ENCODE measurements at regions of chr15 and their contacts with region 1.

Region 1: DNA sequence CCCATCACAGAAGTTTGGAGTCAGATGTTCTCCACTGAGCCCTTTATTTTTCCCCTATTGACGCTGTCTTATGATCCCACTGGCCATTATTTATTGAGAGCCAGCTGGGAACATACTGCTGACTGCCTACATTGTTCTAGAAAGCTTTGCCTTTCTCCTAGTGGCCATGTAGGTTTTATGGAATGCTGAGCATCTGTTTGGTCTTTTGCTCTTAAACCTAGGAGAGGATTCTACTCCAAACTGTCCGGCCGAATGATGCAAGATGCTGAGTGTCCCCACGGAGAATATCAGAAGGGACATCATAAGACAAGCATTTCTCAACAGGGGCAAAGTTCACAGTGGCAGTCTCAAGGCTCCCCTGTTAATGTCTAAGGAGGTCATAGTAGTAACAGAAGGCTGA is 171.4 kb downstream of the ARRDC4 start:
- DNase-seq: no peak
- ATAC-seq: no peak
- H3K4me3 ChIP-seq: no peak overlapping the region
- H3K4me3 Mint-ChIP-seq: no peak overlapping the region
- H3K27ac ChIP-seq: no peak overlapping the region
- H3K27ac Mint-ChIP-seq: no peak overlapping the region
- H3K4me1 ChIP-seq: no peaks in the 10 kb centered on the region
- H3K4me1 Mint-ChIP-seq: no peaks in the 10 kb centered on the region
- H3K27me3 ChIP-seq: no peaks in the 10 kb centered on the region
- H3K27me3 Mint-ChIP-seq: no peaks in the 10 kb centered on the region
- CTCF ChIP-seq: no peak

Region 2: GRCh38 chr15:98076021-98076816 is 55.7 kb before region 1 on chr15:
- CTCF ChIA-PET with region 1: no interaction called
- POLR2A ChIA-PET with region 1: no interaction called
- intact Hi-C with region 1: loop called in 1 of 2 experiments (anchors 10 kb)
- DNase-seq: peak in 1 of 14 experiments; percentile 7
- ATAC-seq: no peak
- H3K4me3 ChIP-seq: no peak overlapping the region
- H3K4me3 Mint-ChIP-seq: no peak overlapping the region
- H3K27ac ChIP-seq: no peak overlapping the region
- H3K27ac Mint-ChIP-seq: no peak overlapping the region
- H3K4me1 ChIP-seq: no peaks in the 10 kb centered on the region
- H3K4me1 Mint-ChIP-seq: no peaks in the 10 kb centered on the region
- H3K27me3 ChIP-seq: no peaks in the 10 kb centered on the region
- H3K27me3 Mint-ChIP-seq: no peaks in the 10 kb centered on the region
- CTCF ChIP-seq: no peak

Region 3: DNA sequence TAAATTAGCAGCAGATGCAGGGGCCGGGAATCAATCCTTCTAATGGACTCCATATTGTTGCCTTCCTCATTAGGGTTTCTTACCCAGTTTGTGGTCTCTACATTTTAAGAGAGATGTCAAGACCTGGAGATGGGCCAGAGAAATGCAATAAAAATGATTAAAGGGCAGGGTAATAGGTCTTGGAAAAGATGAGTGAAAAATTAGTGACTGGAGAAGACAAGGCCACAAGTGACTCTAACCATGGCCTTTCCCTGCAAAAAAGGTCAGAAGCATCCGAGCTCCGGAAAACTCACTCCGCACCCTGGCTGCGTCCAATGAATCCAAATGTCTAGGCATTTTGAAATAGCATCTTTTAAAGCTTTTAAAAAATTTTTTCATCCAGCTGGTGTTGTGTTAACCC is 18.6 kb before region 1 on chr15:
- CTCF ChIA-PET with region 1: no interaction called
- POLR2A ChIA-PET with region 1: no interaction called
- intact Hi-C with region 1: no loop called
- DNase-seq: no peak
- ATAC-seq: no peak
- H3K4me3 ChIP-seq: no peak overlapping the region
- H3K4me3 Mint-ChIP-seq: no peak overlapping the region
- H3K27ac ChIP-seq: no peak overlapping the region
- H3K27ac Mint-ChIP-seq: no peak overlapping the region
- H3K4me1 ChIP-seq: no peaks in the 10 kb centered on the region
- H3K4me1 Mint-ChIP-seq: no peaks in the 10 kb centered on the region
- H3K27me3 ChIP-seq: no peaks in the 10 kb centered on the region
- H3K27me3 Mint-ChIP-seq: no peaks in the 10 kb centered on the region
- CTCF ChIP-seq: no peak

Region 4: DNA sequence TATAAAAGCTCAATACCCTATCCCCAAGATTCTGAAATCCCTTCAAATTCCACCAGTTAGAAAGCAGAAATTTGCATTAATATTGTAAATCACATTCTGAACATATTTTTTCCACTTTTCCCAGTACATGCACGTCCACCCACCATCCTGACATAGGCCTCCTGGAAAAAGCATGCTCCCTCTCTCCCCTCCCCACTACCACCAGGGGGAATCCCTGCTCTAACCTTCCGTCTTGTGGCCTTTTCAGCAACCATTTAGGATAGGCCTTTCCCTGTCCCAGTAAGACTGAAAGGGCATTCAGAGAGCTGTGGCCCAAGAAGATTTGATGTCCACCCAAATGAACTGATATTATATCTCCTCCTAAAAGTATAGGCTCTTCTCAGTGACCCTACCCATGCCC is 10.6 kb after region 1 on chr15:
- CTCF ChIA-PET with region 1: no interaction called
- POLR2A ChIA-PET with region 1: no interaction called
- intact Hi-C with region 1: no loop called
- DNase-seq: no peak
- ATAC-seq: no peak
- H3K4me3 ChIP-seq: no peak overlapping the region
- H3K4me3 Mint-ChIP-seq: no peak overlapping the region
- H3K27ac ChIP-seq: no peak overlapping the region
- H3K27ac Mint-ChIP-seq: no peak overlapping the region
- H3K4me1 ChIP-seq: no peaks in the 10 kb centered on the region
- H3K4me1 Mint-ChIP-seq: peaks cover 10% of the 10 kb centered on the region
- H3K27me3 ChIP-seq: no peaks in the 10 kb centered on the region
- H3K27me3 Mint-ChIP-seq: no peaks in the 10 kb centered on the region
- CTCF ChIP-seq: no peak

Measured in CD4-positive, alpha-beta T cell (primary cell).